AG04450 (cell line): ENCODE measurements at regions of chr12 and their contacts with region 1.

Region 1: DNA sequence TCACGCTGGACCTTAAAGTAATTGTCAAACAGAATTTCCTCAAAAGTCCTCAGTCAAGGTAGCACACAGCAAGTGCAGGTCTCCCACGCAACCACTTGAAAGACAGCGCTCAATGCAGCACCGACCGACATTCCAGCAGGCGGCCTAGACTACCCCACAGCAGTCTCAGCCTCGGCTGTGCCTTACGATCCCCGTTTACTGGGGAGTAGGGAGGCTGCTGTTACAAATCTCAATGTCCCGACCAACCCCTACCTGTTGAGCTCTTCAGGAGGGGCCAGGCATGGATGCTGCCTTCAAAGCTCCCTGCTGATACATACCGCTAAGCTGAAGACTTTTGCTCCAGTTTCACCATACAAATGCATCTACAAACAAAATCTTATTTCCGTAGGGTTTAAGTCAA is 21.8 kb downstream of the VPS37B start:
- DNase-seq: no peak
- H3K4me3 ChIP-seq: no peak overlapping the region
- H3K27ac ChIP-seq: no peak overlapping the region
- H3K27me3 ChIP-seq: no peaks in the 10 kb centered on the region
- CTCF ChIP-seq: no peak

Region 2: DNA sequence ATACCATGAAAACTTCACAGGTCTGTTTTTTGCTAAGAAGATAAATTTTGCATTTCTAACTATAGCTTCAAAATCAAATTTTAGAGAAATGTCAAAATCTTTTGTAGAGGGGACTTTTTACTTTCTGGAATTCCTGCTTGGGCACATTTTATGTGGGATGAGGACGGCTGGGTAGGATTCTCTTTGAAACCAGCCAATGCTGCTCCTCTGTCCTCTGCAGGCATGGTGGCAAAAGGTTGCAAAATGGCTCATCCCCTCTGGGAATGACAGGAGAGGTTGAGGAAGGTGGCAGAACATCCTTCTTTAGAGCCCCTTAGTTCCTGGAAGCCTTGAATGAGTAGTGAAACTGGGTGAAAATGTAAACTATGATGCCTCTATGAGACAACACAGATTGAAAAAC is 106.4 kb before region 1 on chr12:
- CTCF ChIA-PET with region 1: no interaction called
- POLR2A ChIA-PET with region 1: no interaction called
- DNase-seq: no peak
- H3K4me3 ChIP-seq: no peak overlapping the region
- H3K27ac ChIP-seq: no peak overlapping the region
- H3K27me3 ChIP-seq: no peaks in the 10 kb centered on the region
- CTCF ChIP-seq: no peak

Region 3: GRCh38 chr12:122799641-122800243 is 74.3 kb before region 1 on chr12:
- CTCF ChIA-PET with region 1: interaction called, 10 read pairs
- POLR2A ChIA-PET with region 1: no interaction called
- DNase-seq: no peak
- H3K4me3 ChIP-seq: no peak overlapping the region
- H3K27ac ChIP-seq: no peak overlapping the region
- H3K27me3 ChIP-seq: no peaks in the 10 kb centered on the region
- CTCF ChIP-seq: no peak

Region 4: DNA sequence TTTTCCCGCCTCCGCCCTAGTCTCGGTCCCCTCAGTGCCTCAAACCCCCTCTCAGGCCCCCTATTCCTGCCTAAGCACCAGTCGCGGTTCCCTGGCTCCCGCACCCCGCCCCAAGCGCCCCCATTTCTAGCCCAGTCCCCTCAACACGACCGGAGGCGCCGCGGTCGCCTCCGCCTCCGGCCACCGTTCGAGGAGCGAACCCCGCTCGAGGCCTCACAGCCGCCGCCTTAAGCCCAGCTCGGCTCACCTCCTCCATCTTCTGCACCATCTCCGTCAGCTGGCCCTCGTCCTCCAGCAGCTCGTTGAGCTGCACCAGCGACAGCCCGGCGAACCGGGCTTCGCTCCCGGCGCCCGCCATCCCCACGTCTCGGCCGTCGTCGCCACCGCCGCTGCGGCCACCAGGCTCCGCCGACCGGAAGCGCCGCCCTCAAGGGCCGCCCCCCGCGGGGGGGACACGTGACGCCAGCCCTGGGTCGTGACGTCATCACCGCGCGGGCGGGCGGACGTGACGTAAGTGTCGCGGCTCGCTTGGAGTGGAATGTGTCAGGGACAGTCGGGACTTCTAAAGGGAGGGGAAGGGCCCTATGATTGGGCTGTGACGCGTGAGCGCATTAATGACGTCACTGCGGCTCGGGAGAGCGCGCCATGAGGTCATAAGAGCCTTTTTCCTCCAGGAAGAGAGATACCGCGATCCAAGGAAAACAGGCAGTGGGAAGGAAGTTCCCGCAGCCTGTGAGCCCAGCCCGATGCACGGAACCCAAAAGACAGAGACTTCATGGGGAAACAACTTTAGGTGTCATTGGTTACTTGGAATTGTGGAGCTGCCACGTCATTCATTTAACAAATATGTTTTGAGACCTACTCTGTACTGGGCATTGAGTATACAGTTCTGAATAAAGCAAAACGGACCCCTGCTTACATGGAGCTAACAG is 21.9 kb after region 1 on chr12 and contains the start of gene VPS37B:
- CTCF ChIA-PET with region 1: no interaction called
- POLR2A ChIA-PET with region 1: no interaction called
- DNase-seq: no peak
- H3K4me3 ChIP-seq: peak within 1 kb of the TSS; percentile 92
- H3K27ac ChIP-seq: peak within 1 kb of the TSS; percentile 82
- H3K27me3 ChIP-seq: no peaks in the 10 kb centered on the region
- CTCF ChIP-seq: no peak
- polyA plus RNA-seq, gene VPS37B: 23.9 and 24.5 TPM in 2 replicates